Endothelial cell of umbilical vein (primary cell): ENCODE measurements at regions of chr15 and their contacts with region 1.

Region 1: DNA sequence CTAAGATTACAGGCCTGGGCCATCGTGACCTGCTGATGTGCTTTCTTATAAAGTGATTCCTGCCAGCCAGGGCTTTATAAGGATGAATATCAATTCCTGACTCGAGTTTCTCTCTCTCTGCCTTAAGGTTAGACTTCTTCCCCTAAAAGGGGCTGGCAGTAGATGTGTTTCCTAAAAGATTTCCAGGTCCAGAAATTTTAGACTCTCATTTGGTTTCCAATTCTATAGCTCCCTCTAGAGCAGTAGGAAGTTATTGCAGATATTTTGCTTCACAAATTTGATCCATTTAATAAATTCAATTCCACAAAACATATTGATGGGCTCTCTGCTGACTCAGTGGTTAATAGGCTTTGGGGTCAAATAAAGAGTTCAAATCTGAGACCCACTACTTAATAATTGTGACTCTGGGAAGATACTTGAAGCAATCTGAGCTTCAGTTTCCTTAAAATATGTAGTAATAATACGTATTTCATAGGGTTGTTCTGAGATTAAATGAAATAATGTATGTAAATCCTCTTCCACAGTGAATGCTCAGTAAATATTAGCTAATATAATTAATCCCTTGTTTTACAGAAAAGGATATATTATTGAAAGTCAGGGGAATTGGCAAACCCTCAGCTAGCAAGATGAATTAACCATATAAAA is 2.1 kb downstream of the TRIM69 start:
- DNase-seq: peak; percentile 66
- H3K4me3 ChIP-seq: no peak overlapping the region
- H3K27ac ChIP-seq: no peak overlapping the region
- H3K4me1 ChIP-seq: peaks cover 2% of the 10 kb centered on the region
- H3K27me3 ChIP-seq: no peaks in the 10 kb centered on the region
- CTCF ChIP-seq: peak; percentile 40 to 45
- POLR2A ChIP-seq: no peak

Region 2: DNA sequence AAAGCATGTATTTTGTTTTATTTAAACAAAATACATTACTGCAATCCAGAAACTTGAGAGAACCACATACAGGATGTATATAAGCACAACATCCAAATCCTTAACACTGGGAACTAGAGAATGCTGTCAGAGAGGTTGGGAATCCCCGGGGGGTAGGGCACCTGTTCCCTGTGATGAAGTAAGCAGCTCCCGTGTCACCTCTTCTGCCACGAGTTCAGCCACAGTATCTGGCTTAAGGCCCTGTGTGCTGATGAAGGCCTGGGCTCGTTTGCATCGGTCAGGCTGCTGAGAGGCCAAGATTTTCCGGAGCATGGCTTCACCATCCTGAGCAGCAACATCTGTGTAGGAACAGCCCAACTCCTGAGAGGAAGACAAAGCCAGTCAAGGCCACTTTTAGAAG is 165.1 kb before region 1 on chr15:
- CTCF ChIA-PET with region 1: interaction called, 62 read pairs
- POLR2A ChIA-PET with region 1: no interaction called
- dilution Hi-C with region 1: loop called (anchors 25 kb)
- intact Hi-C with region 1: loop called (anchors 1 kb)
- DNase-seq: no peak
- H3K4me3 ChIP-seq: no peak overlapping the region
- H3K27ac ChIP-seq: no peak overlapping the region
- H3K4me1 ChIP-seq: no peaks in the 10 kb centered on the region
- H3K27me3 ChIP-seq: no peaks in the 10 kb centered on the region
- CTCF ChIP-seq: no peak
- POLR2A ChIP-seq: no peak

Region 3: GRCh38 chr15:44593042-44593736 is 145.3 kb before region 1 on chr15:
- CTCF ChIA-PET with region 1: interaction called, 22 read pairs
- POLR2A ChIA-PET with region 1: no interaction called
- dilution Hi-C with region 1: loop called (anchors 25 kb)
- intact Hi-C with region 1: loop called (anchors 1 kb)
- DNase-seq: no peak
- H3K4me3 ChIP-seq: no peak overlapping the region
- H3K27ac ChIP-seq: no peak overlapping the region
- H3K4me1 ChIP-seq: peaks cover 10% of the 10 kb centered on the region
- H3K27me3 ChIP-seq: no peaks in the 10 kb centered on the region
- CTCF ChIP-seq: peak; percentile 39 to 47
- POLR2A ChIP-seq: no peak

Region 4: DNA sequence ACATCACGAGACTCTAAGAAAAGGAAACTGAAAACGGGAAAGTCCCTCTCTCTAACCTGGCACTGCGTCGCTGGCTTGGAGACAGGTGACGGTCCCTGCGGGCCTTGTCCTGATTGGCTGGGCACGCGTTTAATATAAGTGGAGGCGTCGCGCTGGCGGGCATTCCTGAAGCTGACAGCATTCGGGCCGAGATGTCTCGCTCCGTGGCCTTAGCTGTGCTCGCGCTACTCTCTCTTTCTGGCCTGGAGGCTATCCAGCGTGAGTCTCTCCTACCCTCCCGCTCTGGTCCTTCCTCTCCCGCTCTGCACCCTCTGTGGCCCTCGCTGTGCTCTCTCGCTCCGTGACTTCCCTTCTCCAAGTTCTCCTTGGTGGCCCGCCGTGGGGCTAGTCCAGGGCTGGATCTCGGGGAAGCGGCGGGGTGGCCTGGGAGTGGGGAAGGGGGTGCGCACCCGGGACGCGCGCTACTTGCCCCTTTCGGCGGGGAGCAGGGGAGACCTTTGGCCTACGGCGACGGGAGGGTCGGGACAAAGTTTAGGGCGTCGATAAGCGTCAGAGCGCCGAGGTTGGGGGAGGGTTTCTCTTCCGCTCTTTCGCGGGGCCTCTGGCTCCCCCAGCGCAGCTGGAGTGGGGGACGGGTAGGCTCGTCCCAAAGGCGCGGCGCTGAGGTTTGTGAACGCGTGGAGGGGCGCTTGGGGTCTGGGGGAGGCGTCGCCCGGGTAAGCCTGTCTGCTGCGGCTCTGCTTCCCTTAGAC is 26.9 kb before region 1 on chr15 and contains the start of gene B2M:
- CTCF ChIA-PET with region 1: interaction called, 107 read pairs
- POLR2A ChIA-PET with region 1: interaction called, 20 read pairs
- dilution Hi-C with region 1: no loop called
- intact Hi-C with region 1: loop called (anchors 1 kb)
- DNase-seq: peak; percentile 98
- H3K4me3 ChIP-seq: peak within 1 kb of the TSS; percentile 79 to 96 (median 87)
- H3K27ac ChIP-seq: peak within 1 kb of the TSS; percentile 92
- H3K4me1 ChIP-seq: peaks cover 4% of the 10 kb centered on the region
- H3K27me3 ChIP-seq: no peaks in the 10 kb centered on the region
- CTCF ChIP-seq: no peak
- POLR2A ChIP-seq: peak; percentile 100
- total RNA-seq, gene B2M: 725 and 985 TPM in 2 replicates

Region 5: GRCh38 chr15:44753345-44753744 is 14.9 kb after region 1 on chr15:
- CTCF ChIA-PET with region 1: interaction called, 13 read pairs
- POLR2A ChIA-PET with region 1: no interaction called
- dilution Hi-C with region 1: no loop called
- intact Hi-C with region 1: no loop called
- DNase-seq: no peak
- H3K4me3 ChIP-seq: no peak overlapping the region
- H3K27ac ChIP-seq: no peak overlapping the region
- H3K4me1 ChIP-seq: no peaks in the 10 kb centered on the region
- H3K27me3 ChIP-seq: peaks cover 13 to 20% of the 10 kb centered on the region in 2 experiments
- CTCF ChIP-seq: no peak
- POLR2A ChIP-seq: no peak